ENCODE measurements at regions of chr2 and their contacts with region 1.

Region 1: GRCh38 chr2:7044261-7045250 is 127.3 kb downstream of the RNF144A start:
- DNase-seq: peak; percentile 69
- ATAC-seq: peak; percentile 60
- H3K4me3 Mint-ChIP-seq: no peak overlapping the region
- H3K27ac Mint-ChIP-seq: no peak overlapping the region
- H3K4me1 Mint-ChIP-seq: peaks cover 10% of the 10 kb centered on the region
- H3K27me3 Mint-ChIP-seq: no peaks in the 10 kb centered on the region

Region 2: GRCh38 chr2:6826081-6826913 is 218.3 kb before region 1 on chr2:
- CTCF ChIA-PET with region 1: interaction called, 15 read pairs
- POLR2A ChIA-PET with region 1: no interaction called
- DNase-seq: peak; percentile 81
- ATAC-seq: peak; percentile 91
- H3K4me3 Mint-ChIP-seq: no peak overlapping the region
- H3K27ac Mint-ChIP-seq: no peak overlapping the region
- H3K4me1 Mint-ChIP-seq: peaks cover 17% of the 10 kb centered on the region
- H3K27me3 Mint-ChIP-seq: peaks cover 5% of the 10 kb centered on the region

Region 3: DNA sequence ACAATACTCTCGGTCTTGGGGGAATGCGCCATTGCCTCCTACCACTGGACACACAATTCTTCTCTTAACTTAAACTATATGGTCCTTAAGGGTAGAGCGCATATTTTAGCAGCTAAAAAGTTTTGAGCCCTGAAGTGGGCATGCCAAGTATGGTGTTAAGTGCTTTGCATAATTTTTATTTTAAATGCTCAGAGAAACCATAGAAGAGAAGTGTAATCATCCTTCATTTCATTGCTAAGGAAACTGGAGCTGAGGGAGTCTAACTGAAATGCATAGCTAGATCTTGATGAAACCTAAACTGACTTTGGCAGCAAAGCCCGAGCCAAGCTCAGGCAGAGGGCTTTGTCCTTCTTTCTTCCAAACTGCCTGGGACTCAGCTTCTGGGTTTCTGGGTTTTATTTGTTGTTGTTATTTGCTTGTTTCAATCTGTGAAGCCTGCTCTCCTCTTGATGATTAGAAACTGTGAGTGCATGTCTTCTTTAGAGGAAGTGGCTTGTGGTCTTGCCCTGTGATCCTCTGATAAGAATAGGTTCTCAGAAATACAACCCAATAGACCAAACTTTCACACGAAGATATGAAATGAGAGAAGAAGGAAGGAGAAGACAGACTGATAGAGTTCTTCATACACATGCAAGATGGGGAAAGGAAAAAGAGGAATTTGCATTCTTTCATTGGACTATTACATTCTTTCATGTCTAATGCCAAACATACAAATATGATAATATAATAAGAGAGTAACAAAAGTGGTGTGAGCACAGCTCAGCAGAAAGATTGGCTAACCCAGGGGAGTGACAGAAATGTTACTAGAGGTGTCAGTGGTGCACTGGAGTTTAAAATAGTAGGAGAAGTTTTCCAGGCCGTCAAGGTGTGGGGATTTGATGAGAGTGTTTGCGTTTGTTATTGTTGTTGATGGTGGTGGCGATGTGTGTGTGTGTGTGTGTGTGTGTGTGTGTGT is 134.8 kb before region 1 on chr2:
- CTCF ChIA-PET with region 1: interaction called, 12 read pairs
- POLR2A ChIA-PET with region 1: no interaction called
- DNase-seq: peak; percentile 87
- ATAC-seq: peak; percentile 76
- H3K4me3 Mint-ChIP-seq: peak overlapping the region; percentile 41
- H3K27ac Mint-ChIP-seq: peak overlapping the region; percentile 93
- H3K4me1 Mint-ChIP-seq: peaks cover 89% of the 10 kb centered on the region
- H3K27me3 Mint-ChIP-seq: no peaks in the 10 kb centered on the region

Region 4: GRCh38 chr2:6968319-6969100 is 76.0 kb before region 1 on chr2:
- CTCF ChIA-PET with region 1: no interaction called
- POLR2A ChIA-PET with region 1: no interaction called
- DNase-seq: no peak
- ATAC-seq: no peak
- H3K4me3 Mint-ChIP-seq: no peak overlapping the region
- H3K27ac Mint-ChIP-seq: no peak overlapping the region
- H3K4me1 Mint-ChIP-seq: peaks cover 17% of the 10 kb centered on the region
- H3K27me3 Mint-ChIP-seq: no peaks in the 10 kb centered on the region

Region 5: DNA sequence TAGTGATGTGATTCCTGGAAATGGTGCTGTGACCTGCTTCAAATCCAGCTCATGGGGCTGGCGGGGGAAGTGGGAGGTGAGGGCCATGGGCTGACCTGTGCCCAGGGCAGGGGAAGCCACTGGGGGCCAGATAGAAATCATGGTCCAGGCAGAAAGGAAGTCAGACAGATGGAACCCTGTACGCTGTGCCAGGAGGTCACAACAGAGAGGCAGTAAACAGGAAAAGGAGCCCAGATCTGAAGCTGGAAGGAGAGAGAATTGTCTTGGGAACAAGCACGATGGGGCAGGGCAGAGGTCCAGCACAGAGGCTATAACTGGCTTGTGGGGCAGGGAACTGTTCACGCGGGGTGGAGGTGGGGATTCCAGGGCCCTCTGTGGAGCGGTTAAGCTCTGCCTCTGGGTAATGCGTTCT is 51.3 kb before region 1 on chr2:
- CTCF ChIA-PET with region 1: no interaction called
- POLR2A ChIA-PET with region 1: no interaction called
- DNase-seq: no peak
- ATAC-seq: no peak
- H3K4me3 Mint-ChIP-seq: no peak overlapping the region
- H3K27ac Mint-ChIP-seq: peak overlapping the region; percentile 27
- H3K4me1 Mint-ChIP-seq: peaks cover 6% of the 10 kb centered on the region
- H3K27me3 Mint-ChIP-seq: no peaks in the 10 kb centered on the region

Region 6: GRCh38 chr2:7023542-7023941 is 21.0 kb before region 1 on chr2:
- CTCF ChIA-PET with region 1: interaction called, 10 read pairs
- POLR2A ChIA-PET with region 1: interaction called, 3 read pairs
- DNase-seq: no peak
- ATAC-seq: no peak
- H3K4me3 Mint-ChIP-seq: no peak overlapping the region
- H3K27ac Mint-ChIP-seq: no peak overlapping the region
- H3K4me1 Mint-ChIP-seq: peaks cover 8% of the 10 kb centered on the region
- H3K27me3 Mint-ChIP-seq: no peaks in the 10 kb centered on the region

Region 7: GRCh38 chr2:7057865-7058400 is 13.4 kb after region 1 on chr2:
- CTCF ChIA-PET with region 1: interaction called, 27 read pairs
- POLR2A ChIA-PET with region 1: no interaction called
- DNase-seq: peak; percentile 46
- ATAC-seq: peak; percentile 61
- H3K4me3 Mint-ChIP-seq: peak overlapping the region; percentile 26
- H3K27ac Mint-ChIP-seq: peak overlapping the region; percentile 80
- H3K4me1 Mint-ChIP-seq: peaks cover 16% of the 10 kb centered on the region
- H3K27me3 Mint-ChIP-seq: no peaks in the 10 kb centered on the region